Naive thymus-derived CD4-positive, alpha-beta T cell (primary cell): ENCODE measurements at regions of chr1 and their contacts with region 1.

Region 1: DNA sequence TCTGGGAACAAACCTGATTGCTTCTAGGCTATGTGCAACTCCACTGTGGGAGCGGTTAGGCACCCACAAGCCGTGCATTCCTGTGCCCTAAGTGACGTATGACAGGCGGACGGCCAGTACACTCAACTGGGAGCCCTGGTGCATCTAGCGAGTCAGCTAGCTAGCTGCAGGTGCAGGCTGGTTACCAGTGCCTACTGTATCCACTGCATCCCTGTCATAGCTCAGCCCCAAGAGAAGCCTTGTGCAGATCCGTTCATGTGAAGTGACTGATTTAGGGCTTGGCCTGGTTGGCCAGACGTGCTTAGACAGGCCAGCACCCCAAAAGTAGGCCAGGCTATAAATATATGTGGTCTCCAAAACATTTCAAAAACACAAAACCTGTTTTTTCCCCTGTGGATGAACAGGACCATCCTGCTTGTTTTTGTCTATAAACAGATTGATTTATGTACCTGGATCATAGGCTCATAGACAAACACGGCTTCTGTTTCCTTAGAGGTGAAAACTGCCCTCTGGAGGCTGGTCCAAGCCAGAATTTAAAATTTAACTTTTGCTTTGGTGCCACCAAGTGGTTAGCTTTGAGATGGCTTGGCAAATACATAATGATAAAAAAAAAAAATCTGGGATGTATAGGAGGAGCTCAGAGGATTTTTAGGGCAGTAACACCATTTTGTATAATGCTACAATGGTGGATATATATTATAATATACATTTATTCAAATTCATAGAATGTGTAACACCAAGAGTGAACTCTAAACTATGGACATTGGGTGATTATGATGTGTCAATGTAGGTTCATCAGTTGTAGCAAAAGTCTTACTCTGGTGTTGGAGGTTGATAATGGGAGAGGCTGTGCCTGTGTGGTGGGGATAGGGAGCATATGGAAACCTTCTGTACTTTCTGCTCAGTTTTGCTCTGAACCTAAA is 68.5 kb downstream of the GIPC2 start:
- DNase-seq: peak; percentile 15 to 71 (median 58)
- ATAC-seq: peak; percentile 93
- H3K4me3 ChIP-seq: no peak overlapping the region
- H3K4me3 Mint-ChIP-seq: no peak overlapping the region
- H3K27ac ChIP-seq: no peak overlapping the region
- H3K27ac Mint-ChIP-seq: no peak overlapping the region
- H3K4me1 ChIP-seq: no peaks in the 10 kb centered on the region
- H3K4me1 Mint-ChIP-seq: peaks cover 0 to 9% (median 0%) of the 10 kb centered on the region in 7 donors
- H3K27me3 ChIP-seq: no peaks in the 10 kb centered on the region
- H3K27me3 Mint-ChIP-seq: peaks cover 0 to 2% (median 0%) of the 10 kb centered on the region in 5 donors

Region 2: GRCh38 chr1:77143529-77144121 is 970.7 kb before region 1 on chr1:
- CTCF ChIA-PET with region 1: no interaction called
- POLR2A ChIA-PET with region 1: no interaction called
- intact Hi-C with region 1: loop called (anchors 1 kb)
- DNase-seq: peak in 4 of 9 donors; percentile 9 to 31 (median 18)
- ATAC-seq: no peak
- H3K4me3 ChIP-seq: no peak overlapping the region
- H3K4me3 Mint-ChIP-seq: no peak overlapping the region
- H3K27ac ChIP-seq: no peak overlapping the region
- H3K27ac Mint-ChIP-seq: no peak overlapping the region
- H3K4me1 ChIP-seq: peaks cover 0 to 3% of the 10 kb centered on the region in 2 donors
- H3K4me1 Mint-ChIP-seq: peaks cover 0 to 8% (median 6%) of the 10 kb centered on the region in 7 donors
- H3K27me3 ChIP-seq: no peaks in the 10 kb centered on the region
- H3K27me3 Mint-ChIP-seq: no peaks in the 10 kb centered on the region

Region 3: GRCh38 chr1:77565321-77565720 is 549.0 kb before region 1 on chr1:
- CTCF ChIA-PET with region 1: no interaction called
- POLR2A ChIA-PET with region 1: no interaction called
- intact Hi-C with region 1: loop called in 1 of 2 experiments (anchors 10 kb)
- DNase-seq: no peak
- ATAC-seq: no peak
- H3K4me3 ChIP-seq: no peak overlapping the region
- H3K4me3 Mint-ChIP-seq: no peak overlapping the region
- H3K27ac ChIP-seq: no peak overlapping the region
- H3K27ac Mint-ChIP-seq: peak overlapping the region in 8 of 9 donors; percentile 6 to 80 (median 32)
- H3K4me1 ChIP-seq: no peaks in the 10 kb centered on the region
- H3K4me1 Mint-ChIP-seq: peaks cover 0 to 8% (median 0%) of the 10 kb centered on the region in 7 donors
- H3K27me3 ChIP-seq: no peaks in the 10 kb centered on the region
- H3K27me3 Mint-ChIP-seq: no peaks in the 10 kb centered on the region

Region 4: DNA sequence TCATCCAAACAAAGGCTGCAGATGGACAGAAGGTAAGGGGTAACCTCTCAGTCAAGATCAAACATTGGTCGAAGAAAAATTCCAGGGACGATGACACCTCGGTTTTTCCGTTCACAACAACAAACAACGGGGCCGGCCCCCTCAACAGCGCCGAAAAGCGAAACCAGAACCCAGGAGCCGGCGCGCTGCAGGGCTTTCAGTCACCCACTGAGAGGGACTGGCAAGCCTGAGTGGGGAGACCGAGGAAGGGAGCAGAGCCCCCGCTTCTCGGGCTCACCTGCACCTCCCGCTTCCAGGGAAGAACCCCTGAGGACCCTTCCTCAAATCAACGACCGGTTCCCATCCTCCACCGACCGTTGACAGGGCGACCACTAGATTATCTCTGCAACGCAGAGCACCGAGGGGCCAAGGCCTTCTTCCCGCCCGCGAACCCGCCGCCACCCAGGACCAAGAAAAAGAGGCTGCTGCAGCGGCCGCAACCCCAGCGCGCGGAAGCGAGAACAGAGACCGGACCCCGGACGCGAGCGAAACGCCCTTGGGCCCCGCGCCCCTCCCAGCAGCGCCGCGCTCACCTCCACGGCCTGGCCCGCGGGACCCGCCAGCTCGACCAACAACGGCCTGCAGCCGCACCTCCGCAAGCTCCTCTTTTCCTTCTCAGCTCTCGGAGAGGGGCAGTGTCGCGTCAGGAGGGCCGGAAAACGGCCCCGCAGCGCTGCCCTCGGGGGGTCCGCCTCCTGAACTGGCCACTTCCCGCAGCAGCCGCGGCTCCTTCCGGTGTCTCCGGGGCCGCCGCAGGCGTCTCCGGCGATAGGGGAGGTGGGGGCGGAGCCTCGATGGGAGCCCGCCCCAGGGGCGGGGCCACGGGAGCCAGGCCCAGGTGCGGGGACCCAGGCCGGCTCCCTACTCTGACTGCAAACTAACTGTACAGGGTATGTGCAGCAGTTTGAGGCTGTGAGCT is 354.9 kb before region 1 on chr1 and contains the start of gene USP33:
- CTCF ChIA-PET with region 1: no interaction called
- POLR2A ChIA-PET with region 1: no interaction called
- intact Hi-C with region 1: loop called in 1 of 2 experiments (anchors 10 kb)
- DNase-seq: peak; percentile 87 to 98 (median 92)
- ATAC-seq: peak; percentile 98
- H3K4me3 ChIP-seq: peak within 1 kb of the TSS; percentile 61
- H3K4me3 Mint-ChIP-seq: peak within 1 kb of the TSS; percentile 93 to 98 (median 96)
- H3K27ac ChIP-seq: peak within 1 kb of the TSS; percentile 86
- H3K27ac Mint-ChIP-seq: peak within 1 kb of the TSS; percentile 84 to 97 (median 94)
- H3K4me1 ChIP-seq: peaks cover 24 to 25% of the 10 kb centered on the region in 2 donors
- H3K4me1 Mint-ChIP-seq: peaks cover 28 to 64% (median 43%) of the 10 kb centered on the region in 7 donors
- H3K27me3 ChIP-seq: no peaks in the 10 kb centered on the region
- H3K27me3 Mint-ChIP-seq: peaks cover 0 to 10% (median 0%) of the 10 kb centered on the region in 5 donors
- total RNA-seq, gene USP33: 54.0 to 101 (median 86.4) TPM

Region 5: GRCh38 chr1:78004719-78005447 is 109.4 kb before region 1 on chr1 and contains the start of gene DNAJB4:
- CTCF ChIA-PET with region 1: interaction called, 3 read pairs
- POLR2A ChIA-PET with region 1: no interaction called
- intact Hi-C with region 1: loop called (anchors 1 kb)
- DNase-seq: peak in 8 of 9 donors; percentile 30 to 92 (median 87)
- ATAC-seq: peak; percentile 99
- H3K4me3 ChIP-seq: peak within 1 kb of the TSS; percentile 57
- H3K4me3 Mint-ChIP-seq: peak within 1 kb of the TSS; percentile 87 to 99 (median 92)
- H3K27ac ChIP-seq: peak within 1 kb of the TSS; percentile 95
- H3K27ac Mint-ChIP-seq: peak within 1 kb of the TSS; percentile 92 to 100 (median 99)
- H3K4me1 ChIP-seq: peaks cover 8 to 17% of the 10 kb centered on the region in 2 donors
- H3K4me1 Mint-ChIP-seq: peaks cover 9 to 57% (median 53%) of the 10 kb centered on the region in 7 donors
- H3K27me3 ChIP-seq: no peaks in the 10 kb centered on the region
- H3K27me3 Mint-ChIP-seq: peaks cover 0 to 3% (median 0%) of the 10 kb centered on the region in 5 donors
- total RNA-seq, gene DNAJB4: 11.4 to 20.1 (median 18.2) TPM

Region 6: GRCh38 chr1:78156805-78157521 is 42.7 kb after region 1 on chr1:
- CTCF ChIA-PET with region 1: no interaction called
- POLR2A ChIA-PET with region 1: no interaction called
- intact Hi-C with region 1: no loop called
- DNase-seq: no peak
- ATAC-seq: no peak
- H3K4me3 ChIP-seq: no peak overlapping the region
- H3K4me3 Mint-ChIP-seq: no peak overlapping the region
- H3K27ac ChIP-seq: no peak overlapping the region
- H3K27ac Mint-ChIP-seq: no peak overlapping the region
- H3K4me1 ChIP-seq: no peaks in the 10 kb centered on the region
- H3K4me1 Mint-ChIP-seq: peaks cover 0 to 2% (median 0%) of the 10 kb centered on the region in 7 donors
- H3K27me3 ChIP-seq: no peaks in the 10 kb centered on the region
- H3K27me3 Mint-ChIP-seq: peaks cover 6 to 30% (median 19%) of the 10 kb centered on the region in 5 donors

Region 7: GRCh38 chr1:78419309-78419708 is 305.0 kb after region 1 on chr1:
- CTCF ChIA-PET with region 1: no interaction called
- POLR2A ChIA-PET with region 1: no interaction called
- intact Hi-C with region 1: no loop called
- DNase-seq: no peak
- ATAC-seq: no peak
- H3K4me3 ChIP-seq: no peak overlapping the region
- H3K4me3 Mint-ChIP-seq: no peak overlapping the region
- H3K27ac ChIP-seq: no peak overlapping the region
- H3K27ac Mint-ChIP-seq: no peak overlapping the region
- H3K4me1 ChIP-seq: no peaks in the 10 kb centered on the region
- H3K4me1 Mint-ChIP-seq: no peaks in the 10 kb centered on the region
- H3K27me3 ChIP-seq: no peaks in the 10 kb centered on the region
- H3K27me3 Mint-ChIP-seq: peaks cover 0 to 15% (median 4%) of the 10 kb centered on the region in 5 donors

Region 8: GRCh38 chr1:78619803-78620579 is 505.7 kb after region 1 on chr1 and contains the start of gene IFI44L:
- CTCF ChIA-PET with region 1: no interaction called
- POLR2A ChIA-PET with region 1: no interaction called
- intact Hi-C with region 1: no loop called
- DNase-seq: peak; percentile 11 to 65 (median 55)
- ATAC-seq: peak; percentile 42
- H3K4me3 ChIP-seq: peak within 1 kb of the TSS; percentile 36
- H3K4me3 Mint-ChIP-seq: peak within 1 kb of the TSS; percentile 77 to 99 (median 87)
- H3K27ac ChIP-seq: peak within 1 kb of the TSS; percentile 62
- H3K27ac Mint-ChIP-seq: peak within 1 kb of the TSS; percentile 86 to 99 (median 92)
- H3K4me1 ChIP-seq: peaks cover 7 to 24% of the 10 kb centered on the region in 2 donors
- H3K4me1 Mint-ChIP-seq: peaks cover 30 to 75% (median 58%) of the 10 kb centered on the region in 7 donors
- H3K27me3 ChIP-seq: no peaks in the 10 kb centered on the region
- H3K27me3 Mint-ChIP-seq: peaks cover 0 to 5% (median 0%) of the 10 kb centered on the region in 5 donors
- total RNA-seq, gene IFI44L: 1.4 to 194 (median 7.8) TPM